ENCODE measurements at regions of chrX and their contacts with region 1.

Region 1: DNA sequence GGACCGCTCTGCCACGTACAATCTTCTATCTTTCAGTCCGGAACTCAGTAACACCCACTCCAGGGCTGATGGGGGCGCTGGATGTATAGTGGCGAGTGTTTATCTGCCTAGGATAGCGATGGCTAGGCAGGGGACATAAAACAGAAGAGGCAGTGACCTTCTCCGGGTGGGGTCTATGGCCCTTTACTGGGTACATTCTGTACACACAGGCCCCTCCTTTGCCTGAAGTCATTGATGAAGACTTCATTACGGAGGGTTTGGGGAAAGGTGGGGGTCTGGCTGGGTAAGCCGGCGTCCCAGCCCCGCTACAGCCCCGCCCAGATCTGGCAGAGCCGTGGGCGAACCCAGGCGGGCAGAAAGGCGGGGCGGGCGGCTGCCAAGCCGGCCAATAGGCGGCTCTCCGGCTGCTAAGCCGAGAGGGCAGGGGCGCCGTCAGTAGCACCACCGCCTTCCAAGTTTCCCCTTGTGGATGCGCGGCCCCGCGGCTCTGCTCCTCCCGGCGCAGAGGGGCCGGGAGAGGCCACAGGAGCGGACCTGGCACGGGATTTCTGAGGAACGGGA is at the start of gene CHST7:
- DNase-seq: peak; percentile 86
- H3K4me3 Mint-ChIP-seq: peak within 1 kb of the TSS; percentile 89
- H3K27ac Mint-ChIP-seq: peak within 1 kb of the TSS; percentile 88
- H3K4me1 Mint-ChIP-seq: peaks cover 35% of the 10 kb centered on the region
- H3K27me3 Mint-ChIP-seq: no peaks in the 10 kb centered on the region
- total RNA-seq, gene CHST7: 6.5 and 6.9 TPM in 2 replicates

Region 2: DNA sequence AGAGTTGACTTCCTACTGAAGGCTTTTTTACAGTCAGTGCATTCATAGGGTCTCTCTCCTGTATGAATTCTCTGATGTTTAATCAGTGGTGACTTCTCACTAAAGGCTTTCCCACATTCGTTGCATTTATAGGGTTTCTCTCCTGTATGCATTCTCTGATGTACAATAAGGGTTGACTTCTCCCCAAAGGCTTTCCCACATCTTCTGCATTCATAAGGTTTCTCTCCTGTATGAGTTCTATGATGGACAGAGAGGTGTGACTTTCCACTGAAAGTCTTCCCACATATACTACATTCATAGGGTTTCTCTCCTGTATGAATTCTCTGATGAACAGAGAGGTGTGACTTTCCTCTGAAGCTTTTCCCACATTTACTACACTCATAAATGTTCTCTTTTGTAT is 73.4 kb before region 1 on chrX:
- intact Hi-C with region 1: no loop called
- DNase-seq: no peak
- H3K4me3 Mint-ChIP-seq: no peak overlapping the region
- H3K27ac Mint-ChIP-seq: no peak overlapping the region
- H3K4me1 Mint-ChIP-seq: no peaks in the 10 kb centered on the region
- H3K27me3 Mint-ChIP-seq: no peaks in the 10 kb centered on the region

Region 3: DNA sequence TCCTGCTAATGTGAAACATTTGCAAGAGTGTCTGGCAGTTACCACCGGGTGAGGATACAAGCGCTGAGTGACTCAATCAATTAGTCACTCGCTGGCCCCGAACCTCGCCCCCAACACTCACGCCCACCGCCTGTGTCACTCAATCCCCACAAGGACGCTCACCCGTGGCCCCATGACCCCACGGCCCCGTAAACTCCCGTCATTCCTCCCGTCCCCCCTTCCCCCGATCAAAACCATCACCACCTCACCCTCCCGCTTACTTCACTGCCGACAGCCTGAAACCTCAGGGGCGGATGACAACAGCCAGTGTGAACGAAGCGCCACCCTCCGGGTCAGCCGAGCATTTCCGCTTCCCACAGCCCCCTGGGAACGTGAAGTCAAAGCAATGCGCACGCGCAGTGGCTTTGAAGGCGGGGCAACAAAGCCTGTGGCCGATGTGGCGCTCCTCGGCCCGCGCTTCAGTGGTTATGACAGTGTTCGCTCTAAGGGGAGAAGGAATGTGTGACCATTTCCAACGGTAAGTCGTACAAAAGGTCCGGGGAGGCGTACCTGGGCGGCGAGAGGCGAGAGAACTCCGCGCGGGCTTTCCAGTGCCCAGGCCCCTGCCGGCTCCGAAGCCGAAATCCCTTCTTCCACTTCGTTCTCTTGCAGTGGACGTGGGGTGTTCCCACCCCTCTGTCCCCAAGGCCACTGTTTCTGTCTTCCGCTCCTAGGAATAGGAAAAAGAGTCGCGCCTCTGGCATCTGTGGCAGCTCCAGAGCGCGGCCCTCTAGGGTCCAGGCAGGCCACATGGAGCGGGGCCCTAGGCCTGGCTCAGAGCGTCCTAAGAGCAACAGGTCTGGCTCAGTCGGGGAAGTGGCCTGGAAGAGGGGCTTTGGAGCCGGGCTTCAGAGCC is 28.1 kb before region 1 on chrX and contains the start of gene ZNF674:
- intact Hi-C with region 1: loop called (anchors 1 kb)
- DNase-seq: peak; percentile 98
- H3K4me3 Mint-ChIP-seq: peak within 1 kb of the TSS; percentile 95
- H3K27ac Mint-ChIP-seq: peak within 1 kb of the TSS; percentile 97
- H3K4me1 Mint-ChIP-seq: peaks cover 16% of the 10 kb centered on the region
- H3K27me3 Mint-ChIP-seq: no peaks in the 10 kb centered on the region
- total RNA-seq, gene ZNF674: 2.1 and 2.6 TPM in 2 replicates

Region 4: GRCh38 chrX:46588263-46588662 is 14.9 kb after region 1 on chrX:
- intact Hi-C with region 1: loop called (anchors 1 kb)
- DNase-seq: peak; percentile 83
- H3K4me3 Mint-ChIP-seq: peak overlapping the region; percentile 76
- H3K27ac Mint-ChIP-seq: peak overlapping the region; percentile 89
- H3K4me1 Mint-ChIP-seq: peaks cover 25% of the 10 kb centered on the region
- H3K27me3 Mint-ChIP-seq: no peaks in the 10 kb centered on the region

Region 5: GRCh38 chrX:46628460-46629371 is 55.3 kb after region 1 on chrX:
- intact Hi-C with region 1: loop called (anchors 2 kb)
- DNase-seq: peak; percentile 68
- H3K4me3 Mint-ChIP-seq: peak overlapping the region; percentile 67
- H3K27ac Mint-ChIP-seq: peak overlapping the region; percentile 94
- H3K4me1 Mint-ChIP-seq: peaks cover 20% of the 10 kb centered on the region
- H3K27me3 Mint-ChIP-seq: no peaks in the 10 kb centered on the region

Region 6: GRCh38 chrX:46796574-46797191 is 223.3 kb after region 1 on chrX:
- intact Hi-C with region 1: loop called (anchors 1 kb)
- DNase-seq: peak; percentile 90
- H3K4me3 Mint-ChIP-seq: no peak overlapping the region
- H3K27ac Mint-ChIP-seq: no peak overlapping the region
- H3K4me1 Mint-ChIP-seq: peaks cover 10% of the 10 kb centered on the region
- H3K27me3 Mint-ChIP-seq: peaks cover 6% of the 10 kb centered on the region

Measured in activated CD4-positive, alpha-beta T cell treated with anti-CD3 and anti-CD28 coated beads, Interleukin-2, amount 10 ng/mL, durations not matched to agents 24 days and 14 days (primary cell).